Activated T-helper 2 cell treated with anti-CD3 and anti-CD28 coated beads, Interferon-gamma antibody, Interleukin-2, Interleukin-4, amounts not matched to agents 10 μg/mL and 5 μg/mL and 100 μg/mL, durations not matched to agents 14 hours and 24 hours and 36 hours (primary cell): ENCODE measurements at regions of chr1 and their contacts with region 1.

Region 1: GRCh38 chr1:172883107-172883791 is 167.5 kb downstream of the TNFSF18 start:
- DNase-seq: no peak
- H3K4me3 Mint-ChIP-seq: no peak overlapping the region
- H3K27ac Mint-ChIP-seq: peak overlapping the region; percentile 18
- H3K4me1 Mint-ChIP-seq: peaks cover 19% of the 10 kb centered on the region
- H3K27me3 Mint-ChIP-seq: peaks cover 67% of the 10 kb centered on the region

Region 2: GRCh38 chr1:172408958-172409357 is 474.3 kb before region 1 on chr1:
- intact Hi-C with region 1: no loop called
- DNase-seq: no peak
- H3K4me3 Mint-ChIP-seq: no peak overlapping the region
- H3K27ac Mint-ChIP-seq: no peak overlapping the region
- H3K4me1 Mint-ChIP-seq: no peaks in the 10 kb centered on the region
- H3K27me3 Mint-ChIP-seq: peaks cover 3% of the 10 kb centered on the region

Region 3: GRCh38 chr1:172837816-172838680 is 45.2 kb before region 1 on chr1:
- intact Hi-C with region 1: loop called (anchors 1 kb)
- DNase-seq: no peak
- H3K4me3 Mint-ChIP-seq: no peak overlapping the region
- H3K27ac Mint-ChIP-seq: no peak overlapping the region
- H3K4me1 Mint-ChIP-seq: peaks cover 29% of the 10 kb centered on the region
- H3K27me3 Mint-ChIP-seq: peaks cover 53% of the 10 kb centered on the region

Region 4: GRCh38 chr1:172895050-172895460 is 11.8 kb after region 1 on chr1:
- intact Hi-C with region 1: loop called (anchors 1 kb)
- DNase-seq: peak; percentile 20
- H3K4me3 Mint-ChIP-seq: peak overlapping the region; percentile 59
- H3K27ac Mint-ChIP-seq: peak overlapping the region; percentile 0
- H3K4me1 Mint-ChIP-seq: peaks cover 39% of the 10 kb centered on the region
- H3K27me3 Mint-ChIP-seq: peaks cover 46% of the 10 kb centered on the region

Region 5: GRCh38 chr1:173297798-173298391 is 414.6 kb after region 1 on chr1:
- intact Hi-C with region 1: loop called (anchors 5 kb)
- DNase-seq: no peak
- H3K4me3 Mint-ChIP-seq: no peak overlapping the region
- H3K27ac Mint-ChIP-seq: peak overlapping the region; percentile 2
- H3K4me1 Mint-ChIP-seq: peaks cover 28% of the 10 kb centered on the region
- H3K27me3 Mint-ChIP-seq: peaks cover 37% of the 10 kb centered on the region

Region 6: DNA sequence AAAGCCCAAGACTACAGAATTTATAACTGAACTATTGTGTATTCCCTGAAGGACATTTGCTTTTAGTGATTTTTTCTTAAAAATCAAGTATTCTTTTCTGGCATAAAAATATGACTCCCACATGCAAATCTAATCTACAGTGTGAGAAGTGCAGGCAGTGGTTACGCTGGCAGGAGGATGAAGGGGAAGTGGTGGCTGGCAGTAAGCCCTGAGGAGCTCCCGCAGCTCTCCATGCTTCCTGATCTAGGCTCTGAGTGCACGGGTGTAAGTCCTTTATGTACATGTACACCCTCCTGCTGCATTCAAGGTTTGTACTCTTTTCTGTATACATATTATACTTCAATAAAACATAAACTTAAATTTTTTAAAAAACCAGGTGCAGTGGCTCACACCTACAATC is 526.4 kb after region 1 on chr1:
- intact Hi-C with region 1: loop called (anchors 10 kb)
- DNase-seq: no peak
- H3K4me3 Mint-ChIP-seq: no peak overlapping the region
- H3K27ac Mint-ChIP-seq: no peak overlapping the region
- H3K4me1 Mint-ChIP-seq: peaks cover 18% of the 10 kb centered on the region
- H3K27me3 Mint-ChIP-seq: no peaks in the 10 kb centered on the region